Activated T-helper 1 cell treated with anti-CD3 and anti-CD28 coated beads, Interleukin-12 subunit alpha, Interleukin-12 subunit beta, Interleukin-2, Interleukin-4 antibody, amounts not matched to agents 30 ng/mL and 10 ng/mL and 1 ng/mL, durations not matched to agents 14 hours and 24 hours and 36 hours (primary cell): ENCODE measurements at regions of chr1 and their contacts with region 1.

Region 1: GRCh38 chr1:10494754-10495474 is 20.2 kb downstream of the PEX14 start:
- DNase-seq: peak; percentile 72
- H3K4me3 Mint-ChIP-seq: peak overlapping the region; percentile 76
- H3K27ac Mint-ChIP-seq: peak overlapping the region; percentile 91
- H3K4me1 Mint-ChIP-seq: peaks cover 41% of the 10 kb centered on the region
- H3K27me3 Mint-ChIP-seq: no peaks in the 10 kb centered on the region

Region 2: GRCh38 chr1:10378081-10378841 is 116.7 kb before region 1 on chr1:
- intact Hi-C with region 1: loop called (anchors 1 kb)
- DNase-seq: no peak
- H3K4me3 Mint-ChIP-seq: no peak overlapping the region
- H3K27ac Mint-ChIP-seq: no peak overlapping the region
- H3K4me1 Mint-ChIP-seq: no peaks in the 10 kb centered on the region
- H3K27me3 Mint-ChIP-seq: no peaks in the 10 kb centered on the region

Region 3: DNA sequence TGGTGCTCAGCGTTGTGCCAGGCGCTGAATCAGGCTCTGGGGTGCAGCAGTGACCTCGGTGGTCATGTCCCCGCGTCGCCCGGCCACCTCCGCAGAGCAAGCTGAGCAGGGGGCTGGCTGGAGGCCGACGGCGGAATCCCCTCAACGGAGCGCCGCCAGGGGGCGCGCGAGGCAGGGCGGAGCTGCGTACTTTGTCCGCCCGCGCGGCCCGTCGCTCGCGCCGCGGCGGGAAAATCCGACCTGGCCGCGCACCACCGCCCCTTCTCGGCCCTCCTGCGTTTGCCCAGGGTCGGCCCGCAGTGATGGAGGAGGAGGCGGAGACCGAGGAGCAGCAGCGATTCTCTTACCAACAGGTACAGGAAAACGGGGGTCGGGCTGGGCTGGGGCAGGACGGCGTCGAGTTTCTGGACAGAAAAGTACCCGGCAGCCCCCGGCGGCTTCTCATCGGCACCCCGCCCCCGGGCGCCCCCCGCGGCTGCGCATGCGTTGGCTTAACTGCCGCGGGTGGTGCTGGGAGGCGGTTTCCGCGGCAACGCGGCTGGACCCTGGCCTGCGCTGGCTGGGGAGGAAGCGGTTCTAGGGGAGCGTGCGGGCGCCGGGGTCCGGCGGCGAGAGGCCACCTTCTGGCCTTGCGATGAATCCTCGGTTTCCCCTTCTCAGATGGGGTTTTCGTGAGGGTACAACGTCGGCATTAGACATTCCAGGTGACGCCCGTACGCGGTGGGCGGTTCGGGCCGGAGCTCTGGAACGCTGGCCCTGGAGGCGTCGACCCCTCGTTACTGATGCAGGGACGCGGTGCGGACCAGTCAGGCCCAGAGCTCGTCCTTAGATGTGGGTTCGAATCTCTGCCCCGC is 64.5 kb before region 1 on chr1 and contains the start of gene CENPS:
- intact Hi-C with region 1: loop called (anchors 1 kb)
- DNase-seq: peak; percentile 86
- H3K4me3 Mint-ChIP-seq: peak within 1 kb of the TSS; percentile 92
- H3K27ac Mint-ChIP-seq: peak within 1 kb of the TSS; percentile 92
- H3K4me1 Mint-ChIP-seq: peaks cover 24% of the 10 kb centered on the region
- H3K27me3 Mint-ChIP-seq: no peaks in the 10 kb centered on the region
- total RNA-seq, gene CENPS: 22.1 and 23.4 TPM in 2 replicates

Region 4: GRCh38 chr1:10459181-10459580 is 35.7 kb before region 1 on chr1:
- intact Hi-C with region 1: no loop called
- DNase-seq: no peak
- H3K4me3 Mint-ChIP-seq: no peak overlapping the region
- H3K27ac Mint-ChIP-seq: no peak overlapping the region
- H3K4me1 Mint-ChIP-seq: no peaks in the 10 kb centered on the region
- H3K27me3 Mint-ChIP-seq: no peaks in the 10 kb centered on the region

Region 5: GRCh38 chr1:10507111-10507879 is 12.4 kb after region 1 on chr1:
- intact Hi-C with region 1: loop called (anchors 1 kb)
- DNase-seq: peak; percentile 27
- H3K4me3 Mint-ChIP-seq: no peak overlapping the region
- H3K27ac Mint-ChIP-seq: no peak overlapping the region
- H3K4me1 Mint-ChIP-seq: peaks cover 41% of the 10 kb centered on the region
- H3K27me3 Mint-ChIP-seq: no peaks in the 10 kb centered on the region

Region 6: DNA sequence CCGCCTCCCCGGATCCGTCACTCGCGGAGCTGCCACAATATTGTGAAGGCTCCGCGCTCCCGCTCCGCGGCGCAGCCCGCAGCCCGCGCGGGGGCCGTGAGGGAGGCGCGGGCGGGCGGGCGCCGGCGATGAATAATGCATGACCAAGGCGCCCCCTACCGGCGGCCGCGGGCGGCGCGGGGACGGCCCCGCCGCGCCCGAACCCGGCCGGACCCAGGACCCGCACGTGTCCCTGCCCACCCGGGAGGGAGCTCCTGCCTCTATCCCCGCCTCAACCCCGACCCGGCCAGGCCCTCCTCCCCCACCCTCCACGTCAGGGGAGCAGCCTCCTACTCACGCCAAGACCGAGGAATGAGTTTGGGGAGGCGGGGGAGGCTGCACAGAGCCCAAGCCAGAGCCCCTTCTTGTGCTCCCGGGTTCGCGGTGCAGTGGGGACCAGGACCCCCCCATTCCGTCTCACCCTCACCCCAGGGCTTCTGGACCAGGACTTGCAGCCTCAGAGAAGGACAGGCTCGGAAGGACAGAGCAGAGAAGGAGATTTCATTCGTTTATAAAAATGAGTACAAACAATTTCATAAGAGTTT is 372.3 kb after region 1 on chr1:
- intact Hi-C with region 1: loop called (anchors 1 kb)
- DNase-seq: peak; percentile 48
- H3K4me3 Mint-ChIP-seq: peak overlapping the region; percentile 35
- H3K27ac Mint-ChIP-seq: no peak overlapping the region
- H3K4me1 Mint-ChIP-seq: peaks cover 5% of the 10 kb centered on the region
- H3K27me3 Mint-ChIP-seq: peaks cover 67% of the 10 kb centered on the region

Region 7: DNA sequence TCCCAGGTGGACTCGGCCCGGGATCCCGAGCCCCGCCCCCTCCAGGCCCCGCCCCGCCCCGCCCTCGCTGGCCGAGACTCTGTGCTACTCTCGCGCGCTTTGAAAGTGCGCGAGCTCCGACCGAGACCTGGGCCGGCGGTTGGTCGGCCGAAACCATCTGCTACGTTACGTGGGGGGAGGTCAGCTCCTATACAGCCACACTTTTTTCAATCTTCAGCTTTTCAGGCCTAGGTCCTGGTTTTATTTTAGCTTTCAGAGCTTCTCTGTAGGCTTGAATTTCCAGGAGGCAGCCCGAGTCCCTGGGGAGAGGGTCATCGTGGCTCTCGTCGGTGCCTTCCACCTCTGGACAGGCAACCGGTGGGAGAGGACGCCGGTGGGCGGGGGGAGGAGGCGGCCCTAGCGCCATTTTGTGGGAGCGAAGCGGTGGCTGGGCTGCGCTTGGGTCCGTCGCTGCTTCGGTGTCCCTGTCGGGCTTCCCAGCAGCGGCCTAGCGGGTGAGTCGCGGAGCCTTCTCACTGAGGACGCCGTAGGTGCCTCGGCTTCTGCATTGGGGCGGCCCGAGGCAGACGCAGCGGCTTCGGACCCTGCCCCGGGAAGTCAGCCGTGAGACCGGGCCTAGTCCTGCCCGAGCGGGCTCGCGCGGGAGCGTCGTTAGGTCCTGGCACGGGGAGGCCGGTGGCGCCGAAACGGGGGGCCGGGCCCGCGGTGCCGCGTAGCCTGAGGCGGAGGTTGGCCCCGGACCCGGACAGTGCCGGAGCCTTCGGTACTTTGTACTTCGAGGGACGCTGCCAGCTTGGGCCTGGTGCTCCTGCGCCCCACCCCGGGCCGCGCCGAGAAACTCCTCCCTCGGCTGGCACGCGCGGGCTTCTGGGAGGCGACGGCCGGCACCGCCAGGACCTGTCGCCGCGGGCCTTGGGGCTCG is 517.6 kb after region 1 on chr1 and contains the start of gene TARDBP:
- intact Hi-C with region 1: loop called (anchors 1 kb)
- DNase-seq: peak; percentile 88
- H3K4me3 Mint-ChIP-seq: peak within 1 kb of the TSS; percentile 94
- H3K27ac Mint-ChIP-seq: peak within 1 kb of the TSS; percentile 98
- H3K4me1 Mint-ChIP-seq: peaks cover 18% of the 10 kb centered on the region
- H3K27me3 Mint-ChIP-seq: no peaks in the 10 kb centered on the region
- total RNA-seq, gene TARDBP: 197 TPM in 2 replicates

Region 8: GRCh38 chr1:12063141-12064072 is 1568.5 kb after region 1 on chr1 and contains the start of gene TNFRSF8:
- intact Hi-C with region 1: no loop called
- DNase-seq: no peak
- H3K4me3 Mint-ChIP-seq: peak within 1 kb of the TSS; percentile 84
- H3K27ac Mint-ChIP-seq: peak within 1 kb of the TSS; percentile 81
- H3K4me1 Mint-ChIP-seq: peaks cover 81% of the 10 kb centered on the region
- H3K27me3 Mint-ChIP-seq: peaks cover 2% of the 10 kb centered on the region
- total RNA-seq, gene TNFRSF8: 26.9 and 27.9 TPM in 2 replicates